Right ventricle myocardium superior (tissue), 1 donor: ENCODE measurements at regions of chr1 and their contacts with region 1.

Region 1: DNA sequence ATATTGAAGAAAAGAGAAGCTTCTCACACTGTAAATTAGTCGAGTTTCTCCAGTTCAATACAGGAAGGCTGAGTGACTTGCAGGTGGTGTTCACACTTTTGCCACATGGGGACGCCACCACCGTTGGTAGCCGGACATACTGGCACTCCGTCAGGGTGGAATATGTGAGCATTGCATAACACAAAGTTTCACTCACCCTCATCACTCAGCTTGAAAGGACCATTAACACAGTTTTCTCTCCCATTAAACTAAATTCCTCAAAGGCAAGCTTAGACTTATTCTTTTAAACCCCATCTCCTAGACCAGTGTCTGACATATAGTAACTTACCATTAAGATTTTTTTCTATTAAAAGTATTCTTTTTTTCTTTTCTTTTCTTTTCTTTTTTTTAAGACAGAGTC is 105.3 kb upstream of the SERBP1 start:
- DNase-seq: peak; percentile 81
- ATAC-seq: peak; percentile 84

Region 2: DNA sequence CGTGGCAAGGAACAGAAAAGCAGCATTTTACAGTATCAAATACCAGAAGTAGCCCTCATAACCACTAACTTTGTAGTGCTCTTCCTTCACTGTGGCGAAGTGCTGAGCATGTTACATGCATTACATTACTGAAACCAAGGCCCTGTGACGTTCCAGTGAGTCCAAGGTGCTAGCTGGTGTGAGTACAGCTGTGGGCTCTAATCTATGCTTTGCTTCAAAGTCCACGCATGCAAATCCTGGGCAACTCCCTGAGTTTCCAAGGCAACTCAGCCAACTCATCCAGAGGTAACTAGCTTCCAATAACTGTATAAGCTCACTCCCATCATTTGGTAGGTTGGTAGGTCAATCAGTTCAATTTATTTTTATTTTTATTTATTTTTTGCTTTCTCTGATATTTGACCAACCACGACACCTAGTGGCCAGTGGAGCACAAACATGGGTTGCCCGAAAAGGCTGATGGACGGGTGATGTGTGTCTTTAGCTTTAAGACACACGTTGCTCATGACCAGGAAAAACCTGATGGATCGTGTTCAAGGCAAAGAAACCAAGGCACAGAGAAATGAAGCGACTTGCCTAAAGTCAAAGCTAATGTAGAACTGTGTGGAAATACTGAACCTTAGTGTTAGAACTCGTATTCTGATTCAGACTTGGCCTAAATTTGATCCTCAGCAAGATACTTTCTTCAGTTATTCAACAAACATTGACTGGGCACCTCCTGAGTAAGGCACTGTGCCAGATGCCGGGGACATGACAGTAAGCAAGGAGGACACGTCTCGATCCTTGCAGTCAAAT is 224.8 kb after region 1 on chr1:
- intact Hi-C with region 1: loop called (anchors 2 kb)
- DNase-seq: peak; percentile 59
- ATAC-seq: peak; percentile 80